BJ (cell line): ENCODE measurements at regions of chr11 and their contacts with region 1.

Region 1: DNA sequence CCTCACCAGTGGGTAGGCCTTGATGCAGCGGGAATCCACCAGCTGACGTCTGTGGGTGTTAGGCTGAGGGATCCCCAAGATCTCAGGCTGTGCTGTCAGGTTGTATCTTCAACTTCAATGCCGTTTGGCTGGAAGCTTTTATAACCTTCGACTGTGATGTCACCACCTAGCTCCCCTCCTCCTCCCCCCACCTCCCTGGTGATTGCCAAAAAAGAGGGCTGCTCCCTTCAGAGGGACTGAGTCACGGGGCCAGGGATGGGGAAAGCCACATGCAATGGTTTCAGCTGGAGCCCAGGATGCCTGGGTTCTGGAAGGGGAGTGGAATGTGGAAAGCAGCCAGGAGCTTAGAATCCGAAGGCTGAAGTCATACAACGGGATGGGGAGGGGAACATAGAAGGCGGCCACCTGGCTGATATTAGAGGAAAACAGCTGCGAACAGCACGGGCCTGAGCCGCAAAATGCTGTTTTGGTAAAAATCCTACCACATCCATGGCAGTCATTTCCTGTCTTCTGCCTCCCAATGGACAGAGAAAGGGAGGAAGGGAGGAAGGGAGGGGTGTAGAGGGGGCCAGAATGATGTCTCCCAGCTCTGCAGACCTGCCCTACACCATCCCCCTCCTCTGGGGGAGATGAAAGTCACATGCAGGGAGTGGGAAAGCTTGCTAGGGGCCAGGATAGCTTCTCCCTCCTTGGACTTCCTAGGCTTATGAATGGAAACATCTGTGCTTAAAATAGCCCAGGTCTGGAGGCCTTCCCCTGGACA is at the start of gene LRRN4CL:
- DNase-seq: peak; percentile 91
- H3K4me3 ChIP-seq: peak within 1 kb of the TSS; percentile 16
- H3K27me3 ChIP-seq: no peaks in the 10 kb centered on the region
- CTCF ChIP-seq: no peak
- polyA plus RNA-seq, gene LRRN4CL: 2.6 and 2.9 TPM in 2 replicates

Region 2: GRCh38 chr11:62591448-62592145 is 98.0 kb before region 1 on chr11 and contains the start of gene TUT1:
- CTCF ChIA-PET with region 1: interaction called, 13 read pairs
- POLR2A ChIA-PET with region 1: no interaction called
- DNase-seq: peak; percentile 96
- H3K4me3 ChIP-seq: peak within 1 kb of the TSS; percentile 51
- H3K27me3 ChIP-seq: no peaks in the 10 kb centered on the region
- CTCF ChIP-seq: no peak
- polyA plus RNA-seq, gene TUT1: 6.4 and 9.9 TPM in 2 replicates

Region 3: DNA sequence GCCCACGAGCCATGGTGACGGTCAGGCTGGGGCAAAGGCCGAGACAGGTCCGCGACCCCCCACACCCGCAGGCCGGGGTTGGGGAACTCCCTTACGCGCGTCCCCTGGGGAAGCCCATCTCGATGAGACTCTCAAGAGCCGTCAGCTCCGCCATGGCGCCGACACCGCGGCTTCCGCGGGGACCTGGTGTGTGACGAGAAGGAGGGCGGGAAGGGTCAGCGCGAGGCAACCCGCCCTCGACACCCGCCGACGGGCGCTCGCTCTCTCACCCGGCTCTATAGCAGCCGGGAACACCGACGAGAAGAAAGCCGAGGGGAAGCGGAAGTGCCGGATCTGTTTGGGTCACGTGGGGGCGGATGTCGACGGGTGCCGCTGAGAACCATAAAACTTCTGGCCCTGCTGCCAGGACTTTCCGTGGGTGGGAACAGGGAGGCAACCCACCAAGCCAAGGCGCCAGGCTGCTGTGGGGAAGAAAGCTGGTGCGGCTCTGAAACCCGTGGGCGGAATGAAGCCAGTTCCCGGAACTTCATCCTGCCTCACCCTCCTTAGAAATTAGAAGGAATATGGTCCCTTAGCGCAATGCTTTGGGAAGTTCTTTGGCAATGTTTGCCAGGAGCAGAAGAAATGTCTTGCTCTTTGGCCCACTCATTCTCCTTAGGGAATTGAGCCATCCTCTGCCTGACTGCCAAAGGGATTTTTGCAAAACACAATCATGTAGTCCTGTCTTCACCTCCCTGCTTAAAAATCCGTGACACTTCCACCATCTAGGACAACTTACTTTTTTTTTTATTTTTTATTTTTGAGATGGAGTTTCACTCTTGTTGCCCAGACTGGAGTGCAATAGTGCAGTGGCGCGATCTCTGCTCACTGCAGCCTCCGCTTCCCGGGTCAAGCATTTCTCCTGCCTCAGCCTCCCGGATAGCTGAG is 10.6 kb before region 1 on chr11 and contains the start of gene UBXN1:
- CTCF ChIA-PET with region 1: interaction called, 40 read pairs
- POLR2A ChIA-PET with region 1: no interaction called
- DNase-seq: no peak
- H3K4me3 ChIP-seq: peak within 1 kb of the TSS; percentile 74
- H3K27me3 ChIP-seq: no peaks in the 10 kb centered on the region
- CTCF ChIP-seq: no peak
- polyA plus RNA-seq, gene UBXN1: 83.7 and 86.0 TPM in 2 replicates

Region 4: DNA sequence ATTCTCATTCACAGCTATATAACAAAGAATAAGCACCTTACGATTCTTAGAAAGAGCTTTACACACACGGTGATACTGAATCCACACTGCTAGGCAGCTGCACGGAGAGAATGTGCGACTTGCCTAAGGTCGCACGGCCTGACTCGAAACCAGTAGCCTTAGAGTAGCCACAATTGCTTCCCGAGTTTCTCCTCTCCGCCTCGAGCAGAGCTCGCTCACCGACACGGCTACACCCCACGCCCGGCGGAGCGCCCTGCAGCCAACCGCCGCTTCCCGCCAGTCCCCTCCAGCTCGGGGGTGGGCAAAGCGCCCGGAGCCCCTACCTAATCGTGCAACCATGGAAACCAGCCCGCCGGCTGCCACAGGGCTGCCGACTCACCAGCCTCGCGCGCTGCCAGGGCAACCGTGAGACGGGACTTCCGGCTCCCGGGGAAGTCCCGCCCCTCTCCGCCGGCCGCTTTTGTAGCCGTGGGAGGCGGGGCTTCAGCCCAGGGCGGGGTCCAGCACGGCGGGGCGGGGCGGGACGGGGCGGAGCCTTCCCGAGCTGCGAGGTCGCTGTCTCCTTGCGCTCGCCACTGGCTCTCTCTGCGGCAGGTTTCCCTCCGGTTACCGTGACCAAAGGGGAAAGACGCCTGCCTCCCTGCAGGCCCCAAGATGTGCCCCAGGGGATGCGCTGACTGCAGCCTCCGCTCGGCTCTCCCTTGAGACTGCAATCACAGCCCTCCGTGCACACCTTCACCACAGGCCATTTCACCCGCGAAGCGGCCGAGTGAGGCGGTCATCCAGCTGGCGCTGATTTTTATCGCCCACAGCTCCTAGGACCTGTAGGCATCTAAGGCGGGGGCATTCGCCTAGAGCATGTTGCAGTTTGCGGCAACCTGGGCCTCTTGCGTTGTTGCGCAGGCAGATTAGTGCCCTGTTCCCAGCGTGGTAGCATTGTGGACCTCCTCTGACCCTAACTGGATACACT is 16.6 kb after region 1 on chr11:
- CTCF ChIA-PET with region 1: interaction called, 15 read pairs
- POLR2A ChIA-PET with region 1: no interaction called
- DNase-seq: peak; percentile 57
- H3K4me3 ChIP-seq: peak overlapping the region; percentile 58
- H3K27me3 ChIP-seq: no peaks in the 10 kb centered on the region
- CTCF ChIP-seq: no peak